Activated naive CD4-positive, alpha-beta T cell treated with anti-CD3 and anti-CD28 coated beads for 36 hours (primary cell): ENCODE measurements at regions of chr1 and their contacts with region 1.

Region 1: DNA sequence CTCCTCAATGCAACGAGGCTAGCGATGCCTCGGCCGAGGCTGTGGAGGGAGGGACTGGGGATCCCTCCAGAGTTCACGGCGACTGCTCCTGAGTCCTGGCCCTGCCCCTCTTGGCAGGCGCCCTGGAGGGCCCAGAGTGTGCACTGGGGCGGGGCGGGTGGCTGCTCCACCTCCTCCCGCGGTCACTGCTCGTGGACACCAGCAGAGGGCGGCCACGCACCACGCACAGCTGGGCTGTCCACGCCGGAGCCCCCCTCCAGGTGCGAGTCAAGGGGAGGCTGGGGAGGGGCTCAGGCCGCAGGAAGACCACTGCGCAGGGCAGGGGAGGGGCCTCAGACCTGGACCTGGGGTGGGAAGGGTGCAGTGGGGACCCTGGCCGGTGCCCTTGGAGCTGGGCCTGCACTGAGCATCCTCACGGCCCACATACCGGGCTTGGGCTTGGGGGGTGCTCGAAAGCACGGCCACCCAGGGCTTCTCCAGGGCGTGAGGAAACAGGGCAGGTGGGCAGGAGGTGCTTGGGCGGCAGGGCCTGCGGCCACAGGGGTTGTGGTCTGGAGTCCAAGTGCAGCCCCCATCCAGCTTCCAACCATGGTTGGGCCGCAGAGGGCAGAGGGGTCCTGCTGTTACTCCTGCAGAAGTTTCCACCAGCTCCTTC is 20.6 kb upstream of the TTC34 start:
- DNase-seq: peak; percentile 49
- H3K4me3 Mint-ChIP-seq: no peak overlapping the region
- H3K27ac Mint-ChIP-seq: no peak overlapping the region
- H3K4me1 Mint-ChIP-seq: no peaks in the 10 kb centered on the region
- H3K27me3 Mint-ChIP-seq: no peaks in the 10 kb centered on the region

Region 2: DNA sequence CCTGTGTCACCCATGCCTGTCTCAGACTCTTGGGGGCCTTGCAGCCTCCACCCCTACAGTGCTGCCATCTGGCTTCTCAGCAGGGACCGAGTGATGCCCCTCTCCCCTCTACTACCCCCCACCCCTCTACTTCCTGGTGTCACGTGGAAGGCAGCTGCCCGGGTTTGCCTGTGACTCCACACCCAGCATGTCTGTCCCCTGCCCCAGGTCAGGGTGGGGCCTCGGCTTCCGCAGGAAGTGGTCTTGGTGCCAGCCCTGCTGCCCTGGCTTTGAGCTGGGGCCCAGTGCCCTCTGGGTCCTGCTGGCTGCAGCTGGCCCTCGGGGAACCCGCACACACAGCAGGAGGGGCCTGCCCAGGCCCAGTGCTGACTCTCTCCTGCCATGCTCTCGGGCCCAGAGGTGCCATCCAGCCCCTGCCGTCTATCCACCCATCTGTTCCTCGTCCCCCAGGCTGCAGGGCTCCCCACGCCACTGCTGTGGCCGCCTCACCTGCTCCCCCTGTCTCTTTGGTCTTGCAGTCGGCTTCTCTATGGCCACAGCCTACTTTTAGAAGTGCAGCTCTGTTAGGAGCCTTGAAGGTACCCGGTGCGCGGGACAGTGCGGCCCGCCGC is 322.0 kb before region 1 on chr1:
- CTCF ChIA-PET with region 1: no interaction called
- intact Hi-C with region 1: no loop called
- DNase-seq: peak; percentile 29
- H3K4me3 Mint-ChIP-seq: no peak overlapping the region
- H3K27ac Mint-ChIP-seq: no peak overlapping the region
- H3K4me1 Mint-ChIP-seq: peaks cover 10% of the 10 kb centered on the region
- H3K27me3 Mint-ChIP-seq: no peaks in the 10 kb centered on the region

Region 3: DNA sequence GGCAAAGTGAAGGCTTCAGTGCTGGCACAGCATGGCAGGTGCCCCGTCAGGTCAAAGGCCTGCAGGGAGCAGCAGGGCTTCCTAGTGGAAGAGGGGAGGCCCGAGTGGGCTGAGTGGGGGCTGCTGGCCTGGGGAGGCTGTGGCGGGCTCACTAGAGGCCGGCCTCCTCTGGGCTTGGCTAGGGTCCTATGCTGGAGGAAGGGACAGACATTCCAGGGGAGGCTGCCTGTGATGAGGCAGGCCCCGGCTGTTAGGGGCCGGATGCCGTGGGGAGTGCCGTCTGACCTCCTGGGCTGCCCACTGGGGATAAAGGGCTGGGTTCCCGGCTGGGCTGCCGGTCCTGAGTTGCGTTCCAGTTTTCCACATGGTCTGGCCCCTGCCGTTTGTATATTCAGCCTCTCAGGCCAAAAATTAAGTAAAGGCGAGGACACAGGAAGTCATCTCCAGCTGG is 214.4 kb before region 1 on chr1:
- CTCF ChIA-PET with region 1: no interaction called
- intact Hi-C with region 1: no loop called
- DNase-seq: no peak
- H3K4me3 Mint-ChIP-seq: no peak overlapping the region
- H3K27ac Mint-ChIP-seq: no peak overlapping the region
- H3K4me1 Mint-ChIP-seq: no peaks in the 10 kb centered on the region
- H3K27me3 Mint-ChIP-seq: no peaks in the 10 kb centered on the region

Region 4: DNA sequence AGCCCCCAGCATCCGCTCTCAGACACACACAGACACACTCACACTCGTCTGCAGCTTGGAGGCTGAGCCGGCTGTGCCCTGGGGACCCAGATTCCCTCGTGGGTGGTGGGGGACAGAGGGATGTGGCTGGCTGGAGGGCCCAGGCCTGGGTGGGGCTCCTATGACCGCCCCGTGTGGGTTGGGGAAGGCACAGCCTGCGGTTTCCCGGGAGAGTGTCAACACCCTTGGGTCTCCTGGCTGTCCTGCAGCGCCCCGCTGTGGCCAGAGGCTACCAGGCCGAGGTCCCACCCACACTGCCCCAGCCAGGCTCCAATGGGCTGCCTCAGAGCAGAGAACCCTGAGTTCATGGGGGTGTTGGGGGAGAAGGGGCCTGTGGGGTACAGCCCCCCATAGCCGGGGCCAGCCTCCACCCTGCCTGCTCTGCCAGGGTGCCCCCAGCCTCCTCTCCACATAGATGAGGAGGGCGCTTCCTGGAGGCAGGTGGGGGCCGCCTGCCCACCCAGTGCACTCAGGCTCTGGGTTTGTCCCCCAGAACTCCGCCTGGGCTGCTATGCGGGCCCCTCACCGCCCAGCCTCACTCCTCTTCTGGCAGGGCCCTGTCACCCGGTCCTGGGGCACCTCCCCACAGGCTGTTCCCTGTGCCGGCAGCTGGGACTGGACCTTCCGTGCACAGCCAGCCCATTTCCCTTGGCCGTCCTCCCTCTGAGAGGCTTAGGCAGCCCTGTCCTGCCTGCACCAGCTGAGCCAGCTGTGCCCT is 20.4 kb before region 1 on chr1 and contains the start of gene TTC34:
- CTCF ChIA-PET with region 1: no interaction called
- intact Hi-C with region 1: no loop called
- DNase-seq: peak; percentile 68
- H3K4me3 Mint-ChIP-seq: no peak within 1 kb of the TSS
- H3K27ac Mint-ChIP-seq: no peak within 1 kb of the TSS
- H3K4me1 Mint-ChIP-seq: no peaks in the 10 kb centered on the region
- H3K27me3 Mint-ChIP-seq: peaks cover 7% of the 10 kb centered on the region
- total RNA-seq, gene TTC34: 0.91 to 1.1 TPM

Region 5: GRCh38 chr1:2840036-2840809 is 18.1 kb after region 1 on chr1:
- CTCF ChIA-PET with region 1: interaction called, 5 read pairs
- intact Hi-C with region 1: loop called (anchors 1 kb)
- DNase-seq: peak; percentile 80
- H3K4me3 Mint-ChIP-seq: peak overlapping the region; percentile 72
- H3K27ac Mint-ChIP-seq: peak overlapping the region; percentile 73
- H3K4me1 Mint-ChIP-seq: peaks cover 16% of the 10 kb centered on the region
- H3K27me3 Mint-ChIP-seq: no peaks in the 10 kb centered on the region

Region 6: GRCh38 chr1:2921970-2922686 is 100.0 kb after region 1 on chr1:
- CTCF ChIA-PET with region 1: interaction called, 6 read pairs
- intact Hi-C with region 1: loop called (anchors 1 kb)
- DNase-seq: peak; percentile 31
- H3K4me3 Mint-ChIP-seq: no peak overlapping the region
- H3K27ac Mint-ChIP-seq: no peak overlapping the region
- H3K4me1 Mint-ChIP-seq: peaks cover 5% of the 10 kb centered on the region
- H3K27me3 Mint-ChIP-seq: no peaks in the 10 kb centered on the region

Region 7: GRCh38 chr1:3423245-3423829 is 601.2 kb after region 1 on chr1:
- CTCF ChIA-PET with region 1: no interaction called
- intact Hi-C with region 1: loop called (anchors 5 kb)
- DNase-seq: no peak
- H3K4me3 Mint-ChIP-seq: no peak overlapping the region
- H3K27ac Mint-ChIP-seq: no peak overlapping the region
- H3K4me1 Mint-ChIP-seq: no peaks in the 10 kb centered on the region
- H3K27me3 Mint-ChIP-seq: no peaks in the 10 kb centered on the region